Ovary (tissue), 10 donors: ENCODE measurements at regions of chr1 and their contacts with region 1.

Region 1: DNA sequence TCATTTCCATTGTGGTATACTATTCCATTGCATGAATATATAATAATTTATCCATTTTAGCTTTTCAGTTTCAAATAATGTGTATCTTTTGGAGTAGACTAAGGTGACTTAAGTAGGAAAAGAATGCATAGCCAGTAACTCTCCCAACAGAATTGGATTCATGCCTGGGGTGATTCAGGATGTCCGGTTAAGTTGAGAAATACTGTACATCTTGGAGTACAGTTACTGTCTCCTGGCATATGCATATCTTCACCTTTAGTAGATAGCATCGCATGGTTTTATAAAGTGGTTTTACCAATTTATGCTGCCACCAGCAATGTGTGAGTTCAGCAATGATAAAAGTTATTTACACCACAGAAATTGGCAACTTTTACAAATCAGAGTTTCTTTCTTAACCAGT is 18.6 kb upstream of the SLC6A9 start:
- DNase-seq: no peak
- H3K4me3 ChIP-seq: no peak overlapping the region
- H3K27ac ChIP-seq: no peak overlapping the region
- H3K4me1 ChIP-seq: no peaks in the 10 kb centered on the region
- H3K27me3 ChIP-seq: no peaks in the 10 kb centered on the region
- CTCF ChIP-seq: no peak
- EP300 ChIP-seq: no peak
- POLR2A ChIP-seq: no peak

Region 2: DNA sequence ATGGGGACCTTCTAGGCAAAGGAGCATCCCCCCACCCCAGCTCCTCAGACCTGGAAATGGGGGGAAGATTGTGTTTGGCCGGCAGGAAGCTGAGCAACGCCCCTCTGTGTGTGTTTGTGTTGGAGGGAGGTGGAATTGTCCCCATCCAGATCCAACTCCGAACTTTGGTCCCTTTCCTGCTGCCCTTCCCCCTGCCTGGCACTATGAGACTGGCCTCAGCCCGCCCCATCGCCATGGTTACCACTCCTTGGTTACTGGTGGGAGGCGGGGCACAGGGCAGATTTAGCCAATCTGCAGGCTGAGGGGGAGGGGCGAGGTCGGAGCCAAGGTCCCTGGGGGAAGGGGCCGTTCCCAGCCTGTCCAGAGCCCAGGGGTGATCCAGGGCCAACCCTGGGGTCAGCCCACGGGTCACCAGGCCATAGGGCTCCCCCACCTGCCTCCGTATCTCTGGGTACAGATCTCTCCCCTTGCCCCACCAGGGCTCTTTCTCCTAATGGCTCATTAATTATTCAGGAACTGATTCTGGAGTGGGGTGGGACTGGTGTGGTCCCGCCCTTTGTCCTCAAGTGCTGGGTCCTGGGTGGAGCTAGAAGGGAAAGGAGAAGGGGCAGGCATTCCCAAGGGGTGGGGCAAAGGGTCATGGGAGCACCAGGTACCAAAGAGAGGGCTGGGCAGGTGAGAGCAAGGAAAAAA is 504.0 kb before region 1 on chr1:
- intact Hi-C with region 1: loop called in 1 of 4 experiments (anchors 5 kb)
- DNase-seq: peak; percentile 47 to 63 (median 60)
- H3K4me3 ChIP-seq: no peak overlapping the region
- H3K27ac ChIP-seq: no peak overlapping the region
- H3K4me1 ChIP-seq: peaks cover 21% of the 10 kb centered on the region
- H3K27me3 ChIP-seq: no peaks in the 10 kb centered on the region
- CTCF ChIP-seq: no peak
- EP300 ChIP-seq: no peak
- POLR2A ChIP-seq: no peak

Region 3: GRCh38 chr1:43757343-43758053 is 292.3 kb before region 1 on chr1:
- intact Hi-C with region 1: loop called in 2 of 4 experiments (anchors 10 kb)
- DNase-seq: no peak
- H3K4me3 ChIP-seq: no peak overlapping the region
- H3K27ac ChIP-seq: no peak overlapping the region
- H3K4me1 ChIP-seq: no peaks in the 10 kb centered on the region
- H3K27me3 ChIP-seq: no peaks in the 10 kb centered on the region
- CTCF ChIP-seq: no peak
- EP300 ChIP-seq: no peak
- POLR2A ChIP-seq: no peak

Region 4: GRCh38 chr1:43763497-43763973 is 286.3 kb before region 1 on chr1:
- intact Hi-C with region 1: loop called in 2 of 4 experiments (anchors 10 kb)
- DNase-seq: peak; percentile 54 to 81 (median 64)
- H3K4me3 ChIP-seq: no peak overlapping the region
- H3K27ac ChIP-seq: no peak overlapping the region
- H3K4me1 ChIP-seq: peaks cover 2% of the 10 kb centered on the region
- H3K27me3 ChIP-seq: no peaks in the 10 kb centered on the region
- CTCF ChIP-seq: peak; percentile 61 to 83 (median 80)
- EP300 ChIP-seq: no peak
- POLR2A ChIP-seq: no peak

Region 5: GRCh38 chr1:44002606-44003157 is 47.2 kb before region 1 on chr1:
- intact Hi-C with region 1: loop called in 3 of 4 experiments (anchors 2 to 5 kb)
- DNase-seq: no peak
- H3K4me3 ChIP-seq: no peak overlapping the region
- H3K27ac ChIP-seq: no peak overlapping the region
- H3K4me1 ChIP-seq: no peaks in the 10 kb centered on the region
- H3K27me3 ChIP-seq: no peaks in the 10 kb centered on the region
- CTCF ChIP-seq: no peak
- EP300 ChIP-seq: no peak
- POLR2A ChIP-seq: no peak

Region 6: GRCh38 chr1:44008259-44008658 is 41.6 kb before region 1 on chr1:
- intact Hi-C with region 1: loop called in 3 of 4 experiments (anchors 2 to 5 kb)
- DNase-seq: no peak
- H3K4me3 ChIP-seq: no peak overlapping the region
- H3K27ac ChIP-seq: no peak overlapping the region
- H3K4me1 ChIP-seq: no peaks in the 10 kb centered on the region
- H3K27me3 ChIP-seq: no peaks in the 10 kb centered on the region
- CTCF ChIP-seq: no peak
- EP300 ChIP-seq: no peak
- POLR2A ChIP-seq: no peak

Region 7: GRCh38 chr1:44068442-44068921 is 18.6 kb after region 1 on chr1:
- intact Hi-C with region 1: no loop called
- DNase-seq: no peak
- H3K4me3 ChIP-seq: no peak overlapping the region
- H3K27ac ChIP-seq: no peak overlapping the region
- H3K4me1 ChIP-seq: no peaks in the 10 kb centered on the region
- H3K27me3 ChIP-seq: no peaks in the 10 kb centered on the region
- CTCF ChIP-seq: no peak
- EP300 ChIP-seq: no peak
- POLR2A ChIP-seq: no peak